ENCODE measurements at regions of chr1 and their contacts with region 1.

Region 1: DNA sequence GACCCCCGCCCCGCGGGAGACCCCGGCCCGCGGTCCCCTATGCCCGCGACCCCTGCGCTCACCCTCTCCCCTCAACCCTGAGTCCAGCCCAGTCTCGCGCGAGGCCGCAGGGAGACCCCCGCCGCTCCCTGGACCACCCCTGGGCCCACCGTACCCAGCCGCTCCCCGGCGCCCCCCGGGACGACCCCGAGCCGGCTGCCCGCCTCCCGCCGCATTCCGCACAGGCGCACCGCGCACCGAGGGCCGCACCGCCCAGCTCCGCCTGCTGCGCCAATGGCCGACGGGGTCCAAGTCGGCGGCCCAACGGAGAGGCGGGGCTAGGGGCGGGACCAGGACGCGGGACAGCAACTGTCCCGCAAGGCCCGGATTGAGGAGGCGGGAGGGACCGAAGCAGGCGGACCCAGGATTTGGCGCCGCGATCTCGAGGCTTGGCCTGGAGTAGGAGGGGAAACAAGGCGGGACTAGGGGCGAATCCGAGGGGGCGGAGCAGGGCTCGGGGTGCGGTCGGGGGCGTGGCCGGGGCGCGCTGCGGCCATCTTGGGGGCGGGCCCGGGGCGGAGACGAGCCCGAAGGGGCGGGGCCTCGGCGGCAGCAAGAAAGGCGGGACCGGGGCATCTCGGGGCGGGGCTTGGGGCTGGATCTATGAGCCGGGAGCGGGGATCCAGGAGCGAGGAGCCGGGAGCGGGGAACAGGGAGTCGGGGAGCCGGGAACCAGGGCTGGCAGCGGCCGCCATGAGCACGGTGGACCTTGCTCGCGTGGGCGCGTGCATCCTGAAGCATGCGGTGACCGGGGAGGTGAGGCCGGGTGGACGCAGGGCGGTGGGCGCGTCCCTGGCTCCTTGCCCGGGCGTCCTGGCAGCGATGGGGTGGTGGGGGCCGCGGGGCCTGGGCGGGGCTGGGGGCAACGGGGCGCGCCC is at the start of gene PRXL2B:
- DNase-seq: peak; percentile 97 to 100 (median 99)

Region 2: DNA sequence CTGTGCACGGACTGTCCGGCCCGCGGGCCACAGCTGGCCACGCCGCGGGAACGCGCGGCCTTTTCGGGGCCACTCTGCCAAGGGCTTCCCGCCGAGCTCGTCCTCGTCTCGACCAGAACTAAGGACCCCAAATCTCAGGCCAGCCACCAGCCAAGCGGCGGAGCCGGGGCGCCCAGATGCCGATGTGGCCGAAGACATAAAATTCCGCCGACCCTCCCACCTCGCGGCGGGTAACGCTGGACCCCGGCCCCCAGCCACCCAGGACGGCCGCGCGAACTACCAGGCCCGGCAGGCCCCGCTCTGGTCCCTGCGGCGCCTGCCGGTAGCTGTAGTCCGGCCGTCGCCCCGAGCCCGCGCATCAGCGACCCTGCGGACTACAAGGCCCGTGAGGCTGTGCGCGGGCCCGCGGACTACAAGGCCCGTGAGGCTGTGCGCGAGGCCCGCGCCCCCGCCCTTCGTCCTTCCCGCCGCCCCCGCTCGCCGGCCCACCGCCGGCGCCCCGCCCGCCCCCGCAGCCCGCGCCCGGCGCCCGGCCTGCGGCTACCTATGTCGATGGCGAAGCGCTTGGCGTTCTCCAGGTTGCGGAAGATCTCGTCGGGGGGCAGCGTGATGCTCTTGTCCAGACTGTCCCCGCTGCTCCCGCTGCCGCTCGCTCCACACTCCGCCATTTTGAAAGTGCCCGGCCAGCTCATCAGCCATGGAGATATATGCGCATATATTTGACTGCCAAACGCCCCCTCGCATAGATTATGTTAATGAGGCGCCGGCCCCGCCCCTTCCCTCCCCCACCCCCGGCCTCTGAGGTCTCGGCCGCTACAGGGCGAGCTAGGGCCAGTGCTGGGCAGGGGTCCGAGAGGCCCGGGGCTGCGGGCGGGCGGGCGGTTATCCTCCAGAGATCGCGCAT is 60.2 kb before region 1 on chr1 and contains the start of gene PANK4:
- intact Hi-C with region 1: loop called (anchors 2 kb)
- DNase-seq: peak; percentile 86 to 97 (median 93)

Region 3: DNA sequence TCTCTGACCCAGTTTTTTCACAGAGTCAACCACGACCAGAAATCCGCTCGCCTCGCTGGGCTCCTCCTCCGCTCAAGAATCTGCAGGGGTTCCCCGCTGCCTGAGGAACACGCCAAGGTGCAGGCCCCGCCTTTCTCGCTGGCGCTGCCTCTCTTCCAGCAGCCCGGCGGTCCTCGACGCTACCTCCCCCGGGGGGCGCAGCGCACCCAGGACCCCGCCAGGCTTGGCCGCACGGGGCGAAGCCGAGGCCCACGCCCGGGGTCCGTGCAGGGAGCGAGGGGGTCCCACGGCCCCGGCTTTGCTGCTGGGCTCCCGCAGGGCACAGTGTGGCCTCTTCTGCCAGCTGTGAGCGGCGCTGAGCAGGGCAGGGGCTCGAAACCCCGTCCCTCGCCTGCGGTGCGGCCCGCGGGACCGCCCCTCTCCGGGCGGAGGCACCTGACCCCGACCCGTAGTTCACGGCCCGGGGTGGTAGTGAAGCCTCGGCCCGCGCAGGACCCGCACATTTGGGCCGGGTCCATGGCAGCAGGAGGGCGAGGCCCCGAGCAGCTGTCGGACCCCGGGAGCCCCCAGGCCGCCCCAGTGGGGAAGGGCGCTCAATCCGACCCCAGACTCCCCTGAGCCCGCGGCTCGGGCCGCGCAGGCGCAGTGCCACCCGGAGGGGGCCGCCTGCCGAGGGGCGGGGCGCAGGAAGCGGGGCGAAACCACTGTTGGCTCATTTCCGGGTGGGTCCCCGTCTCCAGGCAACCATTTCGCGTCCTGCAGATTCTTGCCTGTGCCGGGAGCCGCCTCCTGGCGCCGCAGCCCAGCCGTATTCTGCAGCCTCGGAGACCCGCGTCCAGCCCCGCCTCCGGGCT is 56.4 kb after region 1 on chr1:
- intact Hi-C with region 1: loop called (anchors 2 kb)
- DNase-seq: peak; percentile 79 to 96 (median 91)